ENCODE measurements at regions of chr14 and their contacts with region 1.

Region 1: DNA sequence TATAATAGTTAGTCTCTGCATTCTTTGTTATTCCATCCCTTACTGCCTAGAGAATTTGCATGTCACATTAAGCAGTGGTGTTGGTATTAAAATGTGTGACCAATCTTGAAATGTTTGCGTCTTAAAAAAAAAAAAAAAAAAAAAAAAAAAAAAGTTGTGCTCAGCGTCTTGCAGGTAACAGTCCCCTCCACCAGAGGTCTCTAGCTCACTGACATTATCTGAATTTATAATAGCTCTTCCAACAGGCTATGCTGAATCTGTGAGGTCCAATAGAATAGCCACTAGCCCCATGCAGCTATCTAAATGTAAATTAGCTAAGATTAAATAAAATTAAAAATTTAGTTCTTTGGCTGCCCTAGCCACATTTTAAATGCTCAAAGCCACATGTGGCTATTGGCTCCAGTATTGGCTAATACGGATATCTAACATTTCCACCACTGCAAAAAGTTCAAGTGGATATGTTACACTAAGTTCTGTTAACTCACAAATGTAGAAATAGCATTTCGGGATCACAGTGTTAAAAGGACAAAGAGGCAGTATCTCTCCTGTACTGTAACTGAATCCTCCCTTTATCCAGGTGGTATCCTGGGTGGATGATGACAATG is 28.7 kb downstream of the NKX2-8 start:
- DNase-seq: peak; percentile 70
- H3K4me3 ChIP-seq: no peak overlapping the region
- H3K27ac ChIP-seq: no peak overlapping the region
- H3K4me1 ChIP-seq: no peaks in the 10 kb centered on the region
- H3K27me3 ChIP-seq: no peaks in the 10 kb centered on the region
- CTCF ChIP-seq: peak; percentile 85

Region 2: GRCh38 chr14:36604757-36605505 is 51.2 kb after region 1 on chr14:
- CTCF ChIA-PET with region 1: interaction called, 26 read pairs
- POLR2A ChIA-PET with region 1: no interaction called
- intact Hi-C with region 1: loop called (anchors 1 kb)
- DNase-seq: peak; percentile 86
- H3K4me3 ChIP-seq: no peak overlapping the region
- H3K27ac ChIP-seq: no peak overlapping the region
- H3K4me1 ChIP-seq: no peaks in the 10 kb centered on the region
- H3K27me3 ChIP-seq: peaks cover 8% of the 10 kb centered on the region
- CTCF ChIP-seq: peak; percentile 86

Region 3: DNA sequence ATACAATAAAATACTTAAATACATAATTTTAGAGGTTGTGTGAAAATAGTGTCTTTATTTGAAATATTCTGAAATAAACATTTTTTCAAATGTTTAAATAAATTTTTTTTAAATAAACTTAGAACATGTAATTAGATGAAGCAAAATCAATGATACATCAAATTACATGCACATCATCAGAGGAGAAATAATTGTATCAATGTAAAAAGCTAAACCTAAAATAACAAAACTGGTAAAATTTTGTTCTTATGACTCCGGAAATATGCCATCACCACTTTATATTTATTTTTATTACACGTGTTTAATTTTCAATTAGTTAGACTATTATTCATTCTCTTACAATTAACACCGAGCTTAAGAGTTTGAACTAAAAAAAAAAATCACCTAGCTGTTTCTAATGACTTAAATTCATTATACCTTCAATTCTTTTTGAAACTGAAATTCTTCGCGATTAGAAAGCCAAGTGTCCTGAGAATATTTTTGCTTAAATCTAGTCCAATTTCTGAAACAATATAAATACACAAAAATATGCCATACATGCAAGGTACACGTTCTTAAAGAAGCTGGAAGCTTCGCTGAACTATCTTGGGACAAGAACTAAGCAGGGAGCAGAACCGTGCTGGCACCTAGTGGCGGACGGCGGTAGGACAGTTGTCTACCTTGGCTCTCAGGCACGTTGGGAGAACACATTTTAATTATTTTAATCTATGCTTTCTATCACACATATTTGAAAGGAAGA is 388.2 kb after region 1 on chr14:
- CTCF ChIA-PET with region 1: interaction called, 36 read pairs
- POLR2A ChIA-PET with region 1: no interaction called
- intact Hi-C with region 1: loop called (anchors 5 kb)
- DNase-seq: peak; percentile 82
- H3K4me3 ChIP-seq: no peak overlapping the region
- H3K27ac ChIP-seq: no peak overlapping the region
- H3K4me1 ChIP-seq: peaks cover 31% of the 10 kb centered on the region
- H3K27me3 ChIP-seq: no peaks in the 10 kb centered on the region
- CTCF ChIP-seq: peak; percentile 97

Region 4: GRCh38 chr14:37034410-37035285 is 480.9 kb after region 1 on chr14:
- CTCF ChIA-PET with region 1: no interaction called
- POLR2A ChIA-PET with region 1: interaction called, 12 read pairs
- intact Hi-C with region 1: no loop called
- DNase-seq: peak; percentile 71
- H3K4me3 ChIP-seq: no peak overlapping the region
- H3K27ac ChIP-seq: peak overlapping the region; percentile 18
- H3K4me1 ChIP-seq: peaks cover 35% of the 10 kb centered on the region
- H3K27me3 ChIP-seq: no peaks in the 10 kb centered on the region
- CTCF ChIP-seq: no peak

Region 5: GRCh38 chr14:37150414-37150813 is 596.7 kb after region 1 on chr14:
- CTCF ChIA-PET with region 1: interaction called, 5 read pairs
- POLR2A ChIA-PET with region 1: no interaction called
- intact Hi-C with region 1: loop called (anchors 5 kb)
- DNase-seq: peak; percentile 75
- H3K4me3 ChIP-seq: no peak overlapping the region
- H3K27ac ChIP-seq: no peak overlapping the region
- H3K4me1 ChIP-seq: no peaks in the 10 kb centered on the region
- H3K27me3 ChIP-seq: no peaks in the 10 kb centered on the region
- CTCF ChIP-seq: peak; percentile 81

Measured in A673 (cell line).